Mammary epithelial cell (primary cell): ENCODE measurements at regions of chr11 and their contacts with region 1.

Region 1: DNA sequence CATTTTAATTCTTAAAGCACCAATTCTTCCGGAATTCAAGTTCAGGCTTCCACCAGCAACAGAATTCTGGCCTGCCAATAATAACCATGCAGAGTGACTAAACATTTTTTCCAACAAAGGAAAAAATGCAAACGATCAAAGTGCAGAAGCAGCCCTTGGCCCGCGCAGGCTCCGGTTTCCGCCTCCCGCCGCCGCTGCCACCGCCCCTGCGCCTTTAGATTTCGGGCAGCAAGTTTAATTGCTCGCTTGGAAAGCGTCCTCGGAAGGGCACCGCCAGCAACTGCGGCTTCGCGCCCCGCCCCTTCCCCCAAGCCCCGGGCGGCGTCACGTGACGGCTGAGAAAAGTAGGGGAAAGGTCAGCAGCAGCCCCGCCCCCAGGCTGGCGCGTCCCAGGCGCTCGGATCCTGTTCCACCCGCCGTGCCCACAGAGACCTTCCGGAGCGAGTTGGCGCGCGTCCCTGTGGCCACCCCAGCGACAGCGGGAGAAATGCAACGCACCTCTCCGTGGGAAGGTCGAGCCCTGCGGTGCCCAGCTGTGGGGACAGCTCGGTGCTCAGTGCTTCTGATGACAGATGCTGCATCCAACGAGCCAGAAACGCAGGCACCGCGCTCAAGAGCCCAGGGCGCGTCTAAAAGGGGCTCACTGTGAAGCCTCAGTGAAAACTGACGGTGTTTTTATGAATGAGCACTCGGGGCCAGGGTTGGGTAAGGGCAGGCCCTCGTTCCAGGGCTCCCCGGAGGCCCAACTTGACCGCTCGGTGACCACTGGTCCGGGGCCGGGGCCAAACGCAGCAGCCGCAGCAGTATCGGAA is 2.5 kb downstream of the CPT1A start:
- DNase-seq: peak; percentile 89
- H3K4me3 ChIP-seq: peak overlapping the region; percentile 45 to 50 (median 49)
- H3K27ac ChIP-seq: peak overlapping the region; percentile 42
- H3K4me1 ChIP-seq: peaks cover 38% of the 10 kb centered on the region
- H3K27me3 ChIP-seq: no peaks in the 10 kb centered on the region
- CTCF ChIP-seq: peak in 1 of 2 donors; percentile 1

Region 2: DNA sequence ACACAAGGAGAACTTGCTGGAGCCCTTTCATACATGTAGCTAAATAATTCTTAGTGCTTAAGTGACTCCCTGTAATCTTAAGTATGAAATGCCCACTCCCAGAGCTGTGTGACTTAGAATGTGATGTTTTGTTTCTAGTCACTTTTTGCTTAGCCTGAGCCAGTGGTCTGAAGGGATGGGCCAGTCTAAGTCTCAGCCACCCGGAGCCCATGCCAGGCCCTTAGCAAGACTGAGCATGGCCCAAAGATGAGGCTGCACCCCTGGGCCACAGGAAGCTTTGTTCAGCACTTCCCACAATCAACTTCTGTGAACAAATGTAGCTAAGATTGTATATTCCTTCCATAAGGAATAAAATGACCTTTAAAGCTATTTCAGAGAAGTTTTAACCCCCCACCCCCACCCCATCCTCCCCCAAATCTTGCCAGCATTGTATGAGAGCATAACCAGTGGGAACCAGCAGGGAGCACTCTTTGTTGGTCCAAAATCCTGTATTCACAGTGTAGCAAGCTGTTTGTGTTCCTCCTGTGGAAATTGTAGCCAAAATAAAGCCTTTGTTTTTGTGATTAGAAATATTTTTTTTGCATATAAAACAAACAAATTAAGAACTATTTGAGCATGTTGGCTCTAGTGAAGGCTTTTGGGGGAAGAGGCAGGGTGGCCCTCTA is 228.7 kb before region 1 on chr11:
- CTCF ChIA-PET with region 1: no interaction called
- dilution Hi-C with region 1: no loop called
- in situ Hi-C with region 1: no loop called
- intact Hi-C with region 1: loop called (anchors 5 kb)
- DNase-seq: no peak
- H3K4me3 ChIP-seq: no peak overlapping the region
- H3K27ac ChIP-seq: no peak overlapping the region
- H3K4me1 ChIP-seq: no peaks in the 10 kb centered on the region
- H3K27me3 ChIP-seq: no peaks in the 10 kb centered on the region
- CTCF ChIP-seq: peak in 1 of 2 donors; percentile 27

Region 3: DNA sequence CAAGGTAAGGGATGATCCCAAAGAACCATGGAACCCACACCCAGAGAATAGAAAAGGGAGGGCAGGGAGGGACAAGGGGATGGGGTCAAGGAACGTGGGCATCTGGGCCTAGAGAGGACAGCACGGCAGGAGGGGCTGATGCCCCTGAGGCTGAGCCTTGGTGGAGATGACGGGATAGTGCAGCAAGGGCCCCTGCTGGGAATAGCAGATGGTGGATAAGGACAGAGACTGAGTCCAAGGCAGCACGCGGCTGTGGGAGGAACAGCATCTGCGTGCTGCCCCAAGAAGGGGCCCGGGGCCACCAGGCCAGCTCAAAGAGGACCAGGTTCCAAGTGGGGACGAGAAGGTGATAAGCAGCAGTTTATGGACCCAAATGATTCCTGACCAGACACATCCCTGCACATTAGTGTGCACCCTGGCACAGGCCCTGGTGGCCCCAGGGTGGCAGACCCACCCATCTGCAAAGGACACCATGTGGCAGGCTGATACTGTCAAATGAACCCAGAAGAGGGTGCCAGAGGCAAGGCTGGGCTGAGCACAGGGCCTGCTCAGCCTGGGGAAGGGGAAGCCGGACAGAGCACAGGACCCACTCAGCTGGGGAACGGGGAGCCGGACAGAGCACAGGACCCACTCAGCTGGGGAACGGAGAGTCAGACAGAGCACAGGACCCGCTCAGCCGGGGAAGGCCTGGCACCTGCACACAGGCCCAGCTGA is 75.2 kb before region 1 on chr11:
- CTCF ChIA-PET with region 1: interaction called, 16 read pairs
- dilution Hi-C with region 1: no loop called
- in situ Hi-C with region 1: no loop called
- intact Hi-C with region 1: no loop called
- DNase-seq: no peak
- H3K4me3 ChIP-seq: no peak overlapping the region
- H3K27ac ChIP-seq: no peak overlapping the region
- H3K4me1 ChIP-seq: no peaks in the 10 kb centered on the region
- H3K27me3 ChIP-seq: no peaks in the 10 kb centered on the region
- CTCF ChIP-seq: peak in 1 of 2 donors; percentile 26

Region 4: GRCh38 chr11:68825571-68825970 is 13.7 kb before region 1 on chr11:
- CTCF ChIA-PET with region 1: no interaction called
- dilution Hi-C with region 1: no loop called
- in situ Hi-C with region 1: no loop called
- intact Hi-C with region 1: loop called (anchors 1 kb)
- DNase-seq: no peak
- H3K4me3 ChIP-seq: no peak overlapping the region
- H3K27ac ChIP-seq: no peak overlapping the region
- H3K4me1 ChIP-seq: no peaks in the 10 kb centered on the region
- H3K27me3 ChIP-seq: no peaks in the 10 kb centered on the region
- CTCF ChIP-seq: peak in 1 of 2 donors; percentile 40

Region 5: GRCh38 chr11:69200331-69201065 is 361.2 kb after region 1 on chr11:
- CTCF ChIA-PET with region 1: no interaction called
- dilution Hi-C with region 1: no loop called
- in situ Hi-C with region 1: no loop called
- intact Hi-C with region 1: no loop called
- DNase-seq: no peak
- H3K4me3 ChIP-seq: no peak overlapping the region
- H3K27ac ChIP-seq: no peak overlapping the region
- H3K4me1 ChIP-seq: no peaks in the 10 kb centered on the region
- H3K27me3 ChIP-seq: no peaks in the 10 kb centered on the region
- CTCF ChIP-seq: no peak

Region 6: GRCh38 chr11:69670158-69670845 is 831.0 kb after region 1 on chr11:
- CTCF ChIA-PET with region 1: no interaction called
- dilution Hi-C with region 1: no loop called
- in situ Hi-C with region 1: loop called in 1 of 2 experiments (anchors 25 kb)
- intact Hi-C with region 1: no loop called
- DNase-seq: peak; percentile 63
- H3K4me3 ChIP-seq: no peak overlapping the region
- H3K27ac ChIP-seq: no peak overlapping the region
- H3K4me1 ChIP-seq: peaks cover 19% of the 10 kb centered on the region
- H3K27me3 ChIP-seq: no peaks in the 10 kb centered on the region
- CTCF ChIP-seq: peak; percentile 98 to 99